ENCODE measurements at regions of chr9 and their contacts with region 1.

Region 1: DNA sequence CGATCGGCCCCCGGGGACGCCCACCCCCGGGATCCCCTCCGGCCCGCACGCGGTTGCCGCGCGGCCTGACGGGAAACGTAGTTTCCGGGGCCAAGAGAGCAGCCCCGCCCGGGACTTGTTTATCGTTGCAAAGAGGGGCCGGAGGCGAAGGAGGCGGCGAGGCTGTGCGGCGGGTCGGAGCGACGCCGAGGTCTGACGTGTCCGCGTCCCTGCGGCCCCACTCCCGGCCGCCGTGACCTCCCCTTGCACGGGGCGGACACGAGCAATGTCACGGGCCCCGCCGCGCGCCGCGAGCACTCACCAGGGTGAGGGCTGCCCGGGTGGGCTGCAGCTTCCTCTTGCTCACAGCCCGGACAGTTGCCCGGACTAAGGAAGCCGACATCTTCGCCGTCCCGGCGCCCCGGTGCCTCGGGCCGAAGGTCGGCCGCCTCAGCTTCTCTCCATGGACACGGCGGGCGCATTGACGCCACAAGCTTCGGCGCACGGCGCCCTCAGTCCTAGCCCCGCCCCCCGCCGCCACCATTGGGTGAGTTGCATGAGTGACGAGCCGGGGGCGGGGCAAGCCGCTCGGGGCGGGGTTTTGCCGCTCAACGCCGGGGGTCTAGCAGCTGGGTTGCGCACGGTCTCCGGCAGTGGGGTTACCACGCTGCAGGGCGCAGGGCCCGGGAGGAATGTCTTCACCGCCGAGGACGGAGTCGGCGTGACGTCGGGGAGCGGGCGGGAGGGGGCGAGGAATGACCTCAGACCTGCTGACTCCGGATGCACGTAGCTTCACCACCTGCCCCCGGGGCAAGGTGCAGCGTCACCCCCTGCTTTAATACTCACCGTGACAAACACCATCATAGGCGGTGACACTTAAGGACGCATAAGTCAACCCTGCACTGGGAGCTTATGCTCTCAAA is at the start of gene ISCA1:
- DNase-seq: peak; percentile 94 to 98
- H3K4me3 ChIP-seq: peak within 1 kb of the TSS; percentile 68 to 81
- H3K27ac ChIP-seq: peak within 1 kb of the TSS; percentile 91 to 98
- H3K4me1 ChIP-seq: peaks cover 0 to 15% of the 10 kb centered on the region in 2 donors
- H3K27me3 ChIP-seq: no peaks in the 10 kb centered on the region
- CTCF ChIP-seq: no peak
- total RNA-seq, gene ISCA1: 20.6 TPM

Region 2: GRCh38 chr9:85940832-85941621 is 341.3 kb before region 1 on chr9 and contains the start of gene NAA35:
- intact Hi-C with region 1: loop called (anchors 2 kb)
- DNase-seq: peak; percentile 91 to 99
- H3K4me3 ChIP-seq: peak within 1 kb of the TSS; percentile 74 to 84
- H3K27ac ChIP-seq: peak within 1 kb of the TSS; percentile 89 to 96
- H3K4me1 ChIP-seq: peaks cover 0 to 18% of the 10 kb centered on the region in 2 donors
- H3K27me3 ChIP-seq: no peaks in the 10 kb centered on the region
- CTCF ChIP-seq: no peak
- total RNA-seq, gene NAA35: 3.3 TPM

Region 3: DNA sequence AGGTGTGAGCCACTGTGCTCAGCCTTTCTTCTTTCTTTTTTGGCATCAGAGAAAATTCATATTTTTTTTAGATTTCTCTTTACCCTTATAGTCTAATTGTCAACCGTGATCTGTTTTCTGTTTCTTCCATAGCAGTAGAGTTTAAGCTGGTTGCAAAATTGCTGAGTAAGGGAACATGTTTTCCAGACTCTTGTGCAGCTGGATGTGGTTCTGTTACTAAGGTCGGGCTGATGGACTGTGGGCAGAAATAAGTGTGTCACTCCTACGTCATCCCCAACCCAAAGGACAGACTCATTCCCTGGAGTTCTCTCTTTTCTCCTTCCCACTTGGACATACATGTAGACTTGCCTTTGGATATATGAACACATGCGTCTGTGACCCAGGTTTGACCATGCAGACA is 118.8 kb before region 1 on chr9:
- intact Hi-C with region 1: no loop called
- DNase-seq: no peak
- H3K4me3 ChIP-seq: no peak overlapping the region
- H3K27ac ChIP-seq: no peak overlapping the region
- H3K4me1 ChIP-seq: no peaks in the 10 kb centered on the region
- H3K27me3 ChIP-seq: no peaks in the 10 kb centered on the region
- CTCF ChIP-seq: no peak

Region 4: GRCh38 chr9:86354011-86354817 is 71.9 kb after region 1 on chr9 and contains the start of gene TUT7:
- intact Hi-C with region 1: loop called (anchors 1 kb)
- DNase-seq: peak; percentile 81 to 97
- H3K4me3 ChIP-seq: peak within 1 kb of the TSS; percentile 93 to 99
- H3K27ac ChIP-seq: peak within 1 kb of the TSS; percentile 97 to 100
- H3K4me1 ChIP-seq: peaks cover 3 to 16% of the 10 kb centered on the region in 2 donors
- H3K27me3 ChIP-seq: no peaks in the 10 kb centered on the region
- CTCF ChIP-seq: no peak
- total RNA-seq, gene TUT7: 12.9 TPM

Region 5: GRCh38 chr9:86721843-86722711 is 439.7 kb after region 1 on chr9:
- intact Hi-C with region 1: loop called (anchors 5 kb)
- DNase-seq: peak in 1 of 2 donors; percentile 88
- H3K4me3 ChIP-seq: no peak overlapping the region
- H3K27ac ChIP-seq: peak overlapping the region; percentile 85 to 89
- H3K4me1 ChIP-seq: peaks cover 7 to 24% of the 10 kb centered on the region in 2 donors
- H3K27me3 ChIP-seq: no peaks in the 10 kb centered on the region
- CTCF ChIP-seq: no peak

Region 6: GRCh38 chr9:87713278-87713987 is 1431.1 kb after region 1 on chr9:
- intact Hi-C with region 1: loop called (anchors 5 kb)
- DNase-seq: peak; percentile 82 to 95
- H3K4me3 ChIP-seq: peak overlapping the region in 1 of 2 donors; percentile 33
- H3K27ac ChIP-seq: peak overlapping the region; percentile 64 to 78
- H3K4me1 ChIP-seq: peaks cover 0 to 14% of the 10 kb centered on the region in 2 donors
- H3K27me3 ChIP-seq: no peaks in the 10 kb centered on the region
- CTCF ChIP-seq: peak in 1 of 3 experiments; percentile 15